Ascending aorta (tissue), 2 donors: ENCODE measurements at regions of chr7 and their contacts with region 1.

Region 1: GRCh38 chr7:80392229-80393169 is 119.4 kb downstream of the GNAT3 start:
- DNase-seq: no peak
- H3K4me3 ChIP-seq: no peak overlapping the region
- H3K27ac ChIP-seq: no peak overlapping the region
- H3K4me1 ChIP-seq: no peaks in the 10 kb centered on the region
- H3K27me3 ChIP-seq: no peaks in the 10 kb centered on the region
- CTCF ChIP-seq: peak in 2 of 3 experiments; percentile 27 to 59

Region 2: DNA sequence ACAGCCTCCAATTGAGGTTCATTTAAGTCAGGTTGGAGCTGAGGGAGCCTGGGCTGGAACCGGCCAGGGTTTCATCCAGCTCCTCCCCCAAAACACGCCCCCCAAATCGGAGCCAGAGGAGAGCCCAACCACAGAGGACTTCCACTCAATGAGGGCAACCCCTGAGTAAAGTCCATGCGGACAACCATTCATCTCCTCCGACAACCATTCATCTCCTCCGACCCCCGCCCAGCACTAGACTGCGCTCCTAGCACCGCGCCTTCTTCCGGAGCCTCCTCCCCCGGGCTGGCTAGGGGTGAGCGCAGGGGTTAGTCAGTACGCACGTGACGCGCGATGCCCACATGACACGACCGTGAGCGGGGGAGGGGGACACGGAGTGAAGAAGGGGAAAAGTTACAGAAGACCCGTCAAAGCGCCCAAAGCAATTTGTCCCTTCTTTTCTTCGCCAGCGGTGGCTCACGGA is 940.4 kb before region 1 on chr7:
- intact Hi-C with region 1: loop called (anchors 10 kb)
- DNase-seq: peak; percentile 64 to 93
- H3K4me3 ChIP-seq: peak overlapping the region; percentile 81 to 90
- H3K27ac ChIP-seq: peak overlapping the region; percentile 96 to 98
- H3K4me1 ChIP-seq: peaks cover 4 to 10% of the 10 kb centered on the region in 2 donors
- H3K27me3 ChIP-seq: no peaks in the 10 kb centered on the region
- CTCF ChIP-seq: no peak

Region 3: GRCh38 chr7:80060218-80060806 is 332.2 kb before region 1 on chr7:
- intact Hi-C with region 1: loop called (anchors 10 kb)
- DNase-seq: no peak
- H3K4me3 ChIP-seq: no peak overlapping the region
- H3K27ac ChIP-seq: no peak overlapping the region
- H3K4me1 ChIP-seq: no peaks in the 10 kb centered on the region
- H3K27me3 ChIP-seq: no peaks in the 10 kb centered on the region
- CTCF ChIP-seq: peak in 2 of 3 experiments; percentile 33 to 49

Region 4: DNA sequence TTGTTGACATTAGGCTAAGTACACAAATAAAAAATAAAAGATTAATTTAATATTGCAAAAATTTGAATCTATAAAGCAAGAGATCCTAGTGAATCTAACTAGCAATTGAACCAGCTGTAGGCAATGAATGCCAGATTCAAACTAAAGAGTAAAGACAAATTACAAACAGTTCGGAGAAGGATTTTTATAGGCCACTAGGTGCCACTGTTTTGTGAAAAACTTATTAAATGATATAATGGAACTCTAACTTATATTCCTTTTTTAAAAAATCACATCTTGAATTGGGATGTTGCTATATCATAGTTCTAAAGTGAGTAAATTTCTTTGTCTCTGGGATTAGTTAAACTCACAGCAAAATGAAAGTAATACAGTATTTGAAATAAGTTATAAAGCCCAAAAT is 297.0 kb before region 1 on chr7:
- intact Hi-C with region 1: loop called (anchors 1 kb)
- DNase-seq: no peak
- H3K4me3 ChIP-seq: no peak overlapping the region
- H3K27ac ChIP-seq: no peak overlapping the region
- H3K4me1 ChIP-seq: no peaks in the 10 kb centered on the region
- H3K27me3 ChIP-seq: no peaks in the 10 kb centered on the region
- CTCF ChIP-seq: peak in 2 of 3 experiments; percentile 34 to 52

Region 5: DNA sequence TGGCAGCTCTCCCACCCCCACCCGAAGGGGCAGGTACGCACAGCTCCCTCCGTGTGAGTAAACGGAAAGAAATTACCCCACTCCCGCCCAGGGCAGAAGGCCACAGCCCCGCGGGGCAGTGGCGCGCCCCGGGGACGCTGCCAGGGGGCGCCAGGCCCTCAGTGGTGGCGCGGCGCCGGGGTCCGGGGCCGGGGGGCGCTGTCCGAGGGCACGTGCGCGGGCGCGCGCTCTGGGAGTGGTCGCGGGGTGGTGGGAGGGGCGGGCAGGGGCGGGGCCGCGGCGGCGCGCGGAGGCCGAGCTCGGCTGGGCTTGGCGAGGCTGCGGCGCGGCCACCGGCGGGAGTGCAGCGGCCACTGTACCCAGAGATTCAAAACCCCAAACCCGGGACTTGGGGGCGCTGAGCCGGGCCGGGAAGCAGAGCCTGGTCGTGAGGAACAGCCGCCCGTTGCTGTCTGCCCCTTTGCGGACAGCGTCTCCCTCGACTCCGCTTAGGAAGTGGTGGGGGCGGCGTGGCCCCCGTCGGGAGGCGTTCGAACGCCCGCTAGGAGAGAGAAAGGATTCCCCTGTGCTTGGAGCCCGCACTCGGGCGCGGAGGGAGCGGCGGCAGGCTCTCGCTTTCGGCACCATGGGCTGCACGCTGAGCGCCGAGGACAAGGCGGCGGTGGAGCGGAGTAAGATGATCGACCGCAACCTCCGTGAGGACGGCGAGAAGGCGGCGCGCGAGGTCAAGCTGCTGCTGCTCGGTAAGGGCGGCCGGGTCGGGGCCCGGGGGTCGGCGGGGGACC is 257.8 kb before region 1 on chr7 and contains the start of gene GNAI1:
- intact Hi-C with region 1: loop called (anchors 5 kb)
- DNase-seq: peak; percentile 26 to 87
- H3K4me3 ChIP-seq: peak within 1 kb of the TSS; percentile 64 to 92
- H3K27ac ChIP-seq: peak within 1 kb of the TSS; percentile 85 to 93
- H3K4me1 ChIP-seq: peaks cover 0 to 24% of the 10 kb centered on the region in 2 donors
- H3K27me3 ChIP-seq: no peaks in the 10 kb centered on the region
- CTCF ChIP-seq: peak; percentile 8 to 33 (median 25)
- total RNA-seq, gene GNAI1: 8.7 TPM

Region 6: GRCh38 chr7:80263333-80263732 is 129.2 kb before region 1 on chr7:
- intact Hi-C with region 1: no loop called
- DNase-seq: no peak
- H3K4me3 ChIP-seq: no peak overlapping the region
- H3K27ac ChIP-seq: no peak overlapping the region
- H3K4me1 ChIP-seq: no peaks in the 10 kb centered on the region
- H3K27me3 ChIP-seq: no peaks in the 10 kb centered on the region
- CTCF ChIP-seq: no peak

Region 7: DNA sequence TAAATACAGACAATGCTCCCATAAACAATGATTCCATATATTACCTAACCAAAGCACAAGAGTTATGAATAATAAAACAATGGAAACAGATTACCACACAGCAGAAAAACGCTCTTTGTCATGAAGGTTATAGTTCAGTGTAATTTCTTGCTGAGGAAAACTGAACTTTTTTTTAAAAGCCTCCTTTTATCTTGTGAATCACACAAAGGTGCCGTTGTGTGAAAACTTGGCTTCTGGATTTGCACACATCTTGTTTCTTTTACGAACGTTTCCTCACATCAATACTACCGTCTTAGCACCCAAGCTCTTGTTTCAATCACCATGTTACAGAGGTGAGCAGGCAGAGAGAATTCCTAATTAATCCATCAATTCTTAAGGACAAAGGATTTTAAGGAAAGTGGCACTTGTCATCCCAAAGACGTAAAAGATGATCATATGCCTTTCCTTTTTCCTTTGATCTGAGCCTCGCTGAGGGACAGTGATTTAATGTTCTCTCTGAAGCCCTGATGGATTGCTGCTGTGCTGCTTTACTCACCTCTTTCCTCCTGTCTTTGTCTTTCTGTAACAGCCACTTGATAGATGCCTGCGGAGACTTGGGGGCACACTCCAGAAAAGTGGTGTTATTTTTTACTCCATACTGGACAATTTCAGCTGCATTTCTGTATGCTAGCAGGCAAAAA is 356.0 kb after region 1 on chr7:
- intact Hi-C with region 1: no loop called
- DNase-seq: no peak
- H3K4me3 ChIP-seq: no peak overlapping the region
- H3K27ac ChIP-seq: no peak overlapping the region
- H3K4me1 ChIP-seq: no peaks in the 10 kb centered on the region
- H3K27me3 ChIP-seq: no peaks in the 10 kb centered on the region
- CTCF ChIP-seq: no peak